Heart right ventricle (tissue), 16 donors: ENCODE measurements at regions of chr6 and their contacts with region 1.

Region 1: GRCh38 chr6:37169496-37170272 is at the start of gene PIM1:
- DNase-seq: peak; percentile 99 to 100
- ATAC-seq: peak; percentile 92 to 97 (median 94)
- H3K4me3 ChIP-seq: peak within 1 kb of the TSS; percentile 74 to 96 (median 92)
- H3K27ac ChIP-seq: peak within 1 kb of the TSS; percentile 75 to 97 (median 92)
- H3K4me1 ChIP-seq: peaks cover 0 to 45% (median 30%) of the 10 kb centered on the region in 9 donors
- H3K27me3 ChIP-seq: no peaks in the 10 kb centered on the region
- CTCF ChIP-seq: no peak
- total RNA-seq, gene PIM1: 9.2 to 106 (median 18.0) TPM

Region 2: GRCh38 chr6:36827261-36828079 is 342.2 kb before region 1 on chr6:
- intact Hi-C with region 1: no loop called
- DNase-seq: peak in 1 of 2 donors; percentile 72
- ATAC-seq: peak; percentile 7 to 82 (median 50)
- H3K4me3 ChIP-seq: no peak overlapping the region
- H3K27ac ChIP-seq: peak overlapping the region; percentile 11 to 91 (median 79)
- H3K4me1 ChIP-seq: peaks cover 29 to 95% (median 73%) of the 10 kb centered on the region in 9 donors
- H3K27me3 ChIP-seq: no peaks in the 10 kb centered on the region
- CTCF ChIP-seq: no peak

Region 3: DNA sequence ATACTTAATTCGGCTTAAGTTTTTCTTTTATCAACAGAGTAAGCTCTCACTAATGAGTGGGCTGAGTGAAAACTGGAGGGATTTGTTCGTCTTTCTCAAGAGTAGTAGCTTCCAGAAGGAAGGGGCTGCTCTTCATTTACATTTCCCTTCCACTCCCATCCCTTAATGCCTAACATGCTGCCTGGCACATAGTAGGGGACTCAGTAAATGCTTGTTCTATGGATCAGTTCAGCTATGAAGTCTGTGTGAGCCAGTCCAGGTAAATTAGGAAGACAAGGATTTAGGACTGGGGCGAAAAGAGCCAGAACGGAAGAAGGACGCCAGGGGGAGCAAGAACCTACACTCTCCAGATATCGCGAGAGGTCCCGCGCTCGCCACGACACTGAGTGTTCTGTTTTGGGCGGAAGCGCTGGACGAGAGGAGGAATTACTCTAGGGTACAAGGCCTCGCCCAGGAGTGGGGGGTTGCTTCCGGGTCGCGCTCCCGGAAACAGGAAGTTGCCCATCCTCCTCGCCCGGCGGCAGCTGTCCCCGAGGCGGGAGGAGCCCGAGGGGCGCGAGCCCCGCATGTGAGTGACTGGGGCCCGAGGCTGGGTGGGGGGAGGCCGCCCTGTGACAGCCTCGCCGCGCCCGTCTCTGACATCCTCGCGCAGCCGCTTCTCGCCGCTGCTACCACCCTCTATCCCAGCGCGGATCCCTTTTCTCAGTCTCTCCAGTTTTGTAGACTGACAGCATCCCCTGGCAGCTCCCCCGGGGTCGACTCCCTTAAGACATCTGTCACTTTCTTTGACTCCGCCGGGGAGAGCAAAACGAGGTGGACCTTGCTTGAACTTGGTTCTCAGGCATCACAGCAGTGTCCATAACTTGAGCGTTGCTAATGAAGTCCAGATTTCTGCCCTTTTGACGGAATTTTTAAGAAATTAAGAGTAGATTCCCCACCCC is 284.0 kb before region 1 on chr6 and contains the start of gene C6orf89:
- intact Hi-C with region 1: loop called in 2 of 10 experiments (anchors 5 kb)
- DNase-seq: peak; percentile 96 to 98
- ATAC-seq: peak; percentile 99 to 100 (median 100)
- H3K4me3 ChIP-seq: peak within 1 kb of the TSS; percentile 18 to 95 (median 74)
- H3K27ac ChIP-seq: peak within 1 kb of the TSS; percentile 76 to 95 (median 92)
- H3K4me1 ChIP-seq: peaks cover 8 to 46% (median 30%) of the 10 kb centered on the region in 9 donors
- H3K27me3 ChIP-seq: no peaks in the 10 kb centered on the region
- CTCF ChIP-seq: peak; percentile 78 to 96 (median 85)
- total RNA-seq, gene C6orf89: 64.6 to 104 (median 74.7) TPM

Region 4: GRCh38 chr6:37029249-37029971 is 140.3 kb before region 1 on chr6:
- intact Hi-C with region 1: loop called in 7 of 10 experiments (anchors 1 to 10 kb)
- DNase-seq: peak; percentile 62 to 64
- ATAC-seq: peak; percentile 85 to 96 (median 92)
- H3K4me3 ChIP-seq: no peak overlapping the region
- H3K27ac ChIP-seq: peak overlapping the region in 2 of 10 donors; percentile 26 to 85
- H3K4me1 ChIP-seq: peaks cover 0 to 22% (median 0%) of the 10 kb centered on the region in 9 donors
- H3K27me3 ChIP-seq: no peaks in the 10 kb centered on the region
- CTCF ChIP-seq: peak; percentile 70 to 93 (median 83)

Region 5: DNA sequence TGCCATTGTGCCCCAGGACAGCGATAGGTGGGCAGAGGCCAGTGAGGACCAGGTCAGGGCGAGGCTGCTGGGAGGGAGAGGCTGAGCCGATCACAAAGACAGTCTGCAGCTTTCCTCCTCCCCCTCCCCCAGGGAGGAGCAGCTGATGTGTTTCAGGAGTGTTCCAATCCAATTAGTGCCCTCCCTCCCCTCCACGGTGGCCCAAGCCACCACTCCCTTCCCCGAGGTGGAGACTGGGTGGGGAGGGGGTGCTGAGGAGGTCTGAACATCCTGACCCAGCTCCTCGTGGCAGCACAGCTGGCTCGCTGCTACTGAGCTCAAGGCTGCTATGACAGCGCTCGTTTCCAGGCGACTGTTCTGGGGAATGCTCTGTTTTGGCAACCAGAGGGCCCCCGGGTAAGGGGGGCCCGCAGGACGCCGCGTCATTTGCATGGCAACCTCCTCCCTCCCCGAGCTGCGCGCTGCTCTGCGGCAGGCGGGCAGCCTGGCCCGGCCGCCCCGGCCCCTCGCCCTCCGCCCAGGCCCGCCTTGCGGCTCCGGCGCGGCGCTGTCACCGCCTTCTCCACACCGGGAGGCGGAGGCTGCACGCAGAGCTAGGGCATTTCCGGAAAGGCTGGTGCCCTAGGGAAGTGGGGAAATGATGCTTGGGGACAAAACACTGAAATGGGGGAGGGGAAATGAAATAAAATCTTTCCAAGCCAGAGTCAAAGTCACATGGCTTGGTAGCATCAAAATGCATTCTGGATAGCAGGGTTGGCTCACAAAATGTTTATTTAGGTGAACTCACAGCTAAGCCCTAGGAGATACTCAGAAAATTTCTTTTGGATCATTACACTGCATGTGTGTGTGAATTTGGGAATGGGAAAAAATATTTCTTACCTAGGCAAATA is 67.2 kb before region 1 on chr6:
- intact Hi-C with region 1: loop called in 4 of 10 experiments (anchors 1 to 5 kb)
- DNase-seq: peak; percentile 87 to 89
- ATAC-seq: peak; percentile 91 to 97 (median 94)
- H3K4me3 ChIP-seq: peak overlapping the region; percentile 14 to 60 (median 48)
- H3K27ac ChIP-seq: peak overlapping the region; percentile 51 to 94 (median 86)
- H3K4me1 ChIP-seq: peaks cover 7 to 39% (median 21%) of the 10 kb centered on the region in 9 donors
- H3K27me3 ChIP-seq: no peaks in the 10 kb centered on the region
- CTCF ChIP-seq: no peak

Region 6: GRCh38 chr6:37137201-37138090 is 32.2 kb before region 1 on chr6:
- intact Hi-C with region 1: loop called in 2 of 10 experiments (anchors 2 to 5 kb)
- DNase-seq: no peak
- ATAC-seq: peak; percentile 28 to 75 (median 46)
- H3K4me3 ChIP-seq: no peak overlapping the region
- H3K27ac ChIP-seq: peak overlapping the region in 2 of 10 donors; percentile 7 to 77
- H3K4me1 ChIP-seq: peaks cover 3 to 44% (median 13%) of the 10 kb centered on the region in 9 donors
- H3K27me3 ChIP-seq: no peaks in the 10 kb centered on the region
- CTCF ChIP-seq: no peak

Region 7: DNA sequence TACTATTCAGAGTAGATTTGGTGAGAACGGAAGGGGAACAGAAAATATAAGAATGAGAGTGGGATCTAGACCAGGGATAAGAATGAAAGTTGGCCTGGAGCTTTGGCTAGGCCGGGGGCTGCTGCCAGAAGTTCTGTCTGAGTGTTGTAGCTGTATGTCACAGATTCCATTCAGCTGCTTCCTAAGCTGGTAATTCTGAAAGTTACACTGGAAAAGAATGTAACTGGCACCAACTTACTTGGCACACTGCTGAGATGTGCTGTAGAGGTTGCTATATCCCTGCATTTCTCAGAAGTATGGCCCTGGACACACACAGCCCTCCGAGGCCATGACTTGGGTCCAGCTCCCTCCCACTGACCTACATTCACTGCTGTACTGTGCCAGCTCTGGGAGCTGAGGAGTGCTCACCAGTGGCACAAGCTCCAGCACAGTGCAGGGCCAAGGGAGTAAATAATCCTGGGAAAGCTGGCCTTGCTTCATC is 114.0 kb after region 1 on chr6:
- intact Hi-C with region 1: no loop called
- DNase-seq: peak; percentile 59 to 63
- ATAC-seq: peak; percentile 86 to 94 (median 90)
- H3K4me3 ChIP-seq: no peak overlapping the region
- H3K27ac ChIP-seq: peak overlapping the region in 9 of 10 donors; percentile 3 to 54 (median 28)
- H3K4me1 ChIP-seq: peaks cover 3 to 54% (median 40%) of the 10 kb centered on the region in 9 donors
- H3K27me3 ChIP-seq: no peaks in the 10 kb centered on the region
- CTCF ChIP-seq: no peak